Caco-2 (cell line): ENCODE measurements at regions of chr5 and their contacts with region 1.

Region 1: DNA sequence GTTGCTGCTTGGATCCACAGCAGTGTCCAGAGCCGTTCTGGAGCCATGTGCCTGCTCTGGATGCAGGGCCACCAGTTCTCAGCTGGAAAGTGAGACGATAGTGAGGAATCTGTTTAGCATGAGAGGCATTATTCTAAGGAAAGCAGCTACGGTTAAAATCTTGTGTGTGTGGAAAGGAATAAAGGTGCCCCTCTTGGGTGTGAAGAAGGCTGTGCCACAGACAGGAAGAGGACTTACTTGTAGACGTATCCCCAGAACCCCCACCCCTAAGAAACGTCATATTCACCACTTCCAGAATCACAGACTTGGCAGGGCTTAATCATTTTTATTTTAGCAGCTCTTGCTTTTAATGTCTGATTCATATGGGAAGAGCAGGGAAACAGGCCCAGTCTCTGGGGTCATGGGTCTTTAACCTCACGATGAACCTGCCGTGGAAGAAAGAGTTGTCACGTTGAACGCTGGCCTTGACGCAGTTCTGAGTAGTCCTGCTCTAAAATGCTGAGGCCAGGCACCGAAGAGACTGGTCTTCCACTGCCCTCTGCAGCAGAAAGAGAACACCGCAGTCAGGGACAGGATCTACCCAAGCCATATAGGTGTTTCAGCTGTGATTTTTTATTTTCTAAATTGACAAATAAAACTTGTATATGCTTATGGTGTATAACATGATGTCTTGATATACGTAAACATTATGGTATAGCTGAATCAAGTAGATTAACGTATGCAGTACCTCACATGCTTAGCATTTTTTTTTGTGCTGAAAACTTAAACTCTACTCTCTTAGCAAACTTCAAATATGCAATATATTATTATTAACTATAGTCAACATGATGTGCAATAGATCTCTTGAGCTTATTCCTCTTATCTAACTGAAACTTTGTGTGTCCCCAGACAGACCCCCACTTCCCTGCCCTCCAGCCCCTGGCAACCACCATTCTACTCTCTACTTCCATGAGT is 38.8 kb downstream of the CARTPT start:
- DNase-seq: peak; percentile 62 to 68
- H3K4me3 ChIP-seq: no peak overlapping the region
- H3K4me3 Mint-ChIP-seq: no peak overlapping the region
- H3K27ac Mint-ChIP-seq: no peak overlapping the region
- H3K4me1 ChIP-seq: no peaks in the 10 kb centered on the region
- H3K4me1 Mint-ChIP-seq: no peaks in the 10 kb centered on the region
- H3K27me3 ChIP-seq: peaks cover 1% of the 10 kb centered on the region; the same call in 1 of the 2 replicates
- H3K27me3 Mint-ChIP-seq: peaks cover 3% of the 10 kb centered on the region
- CTCF ChIP-seq: peak; percentile 76 to 90

Region 2: GRCh38 chr5:71475788-71476384 is 282.0 kb before region 1 on chr5:
- CTCF ChIA-PET with region 1: interaction called, 6 read pairs
- POLR2A ChIA-PET with region 1: no interaction called
- intact Hi-C with region 1: loop called (anchors 1 kb)
- DNase-seq: peak in 1 of 2 experiments; percentile 21
- H3K4me3 ChIP-seq: no peak overlapping the region
- H3K4me3 Mint-ChIP-seq: no peak overlapping the region
- H3K27ac Mint-ChIP-seq: no peak overlapping the region
- H3K4me1 ChIP-seq: no peaks in the 10 kb centered on the region
- H3K4me1 Mint-ChIP-seq: no peaks in the 10 kb centered on the region
- H3K27me3 ChIP-seq: no peaks in the 10 kb centered on the region
- H3K27me3 Mint-ChIP-seq: no peaks in the 10 kb centered on the region
- CTCF ChIP-seq: peak; percentile 59 to 67

Region 3: DNA sequence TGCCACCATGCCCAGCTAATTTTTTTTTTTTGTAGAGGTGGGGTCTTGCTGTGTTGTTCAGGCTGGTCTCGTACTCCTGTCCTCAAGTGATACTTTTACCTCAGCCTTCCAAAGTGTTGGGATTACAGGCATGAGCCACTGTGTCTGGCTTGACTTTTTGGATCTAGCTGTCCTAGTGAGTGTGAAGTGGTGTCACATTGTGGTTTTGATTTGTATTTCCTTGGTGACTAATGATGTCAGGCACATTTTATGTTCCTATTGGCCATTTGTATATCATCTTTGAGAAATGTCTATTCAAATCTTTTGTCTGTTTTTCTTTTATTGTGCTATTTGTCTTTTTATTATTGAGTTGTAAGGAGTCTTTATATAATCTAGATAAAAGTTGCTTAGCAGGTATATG is 224.3 kb before region 1 on chr5:
- CTCF ChIA-PET with region 1: no interaction called
- POLR2A ChIA-PET with region 1: no interaction called
- intact Hi-C with region 1: loop called (anchors 10 kb)
- DNase-seq: no peak
- H3K4me3 ChIP-seq: no peak overlapping the region
- H3K4me3 Mint-ChIP-seq: no peak overlapping the region
- H3K27ac Mint-ChIP-seq: peak overlapping the region; percentile 32
- H3K4me1 ChIP-seq: no peaks in the 10 kb centered on the region
- H3K4me1 Mint-ChIP-seq: no peaks in the 10 kb centered on the region
- H3K27me3 ChIP-seq: no peaks in the 10 kb centered on the region
- H3K27me3 Mint-ChIP-seq: no peaks in the 10 kb centered on the region
- CTCF ChIP-seq: no peak

Region 4: GRCh38 chr5:71573592-71573991 is 184.3 kb before region 1 on chr5:
- CTCF ChIA-PET with region 1: no interaction called
- POLR2A ChIA-PET with region 1: no interaction called
- intact Hi-C with region 1: loop called (anchors 1 kb)
- DNase-seq: peak; percentile 52
- H3K4me3 ChIP-seq: no peak overlapping the region
- H3K4me3 Mint-ChIP-seq: no peak overlapping the region
- H3K27ac Mint-ChIP-seq: peak overlapping the region; percentile 71
- H3K4me1 ChIP-seq: peaks cover 15% of the 10 kb centered on the region
- H3K4me1 Mint-ChIP-seq: peaks cover 20% of the 10 kb centered on the region
- H3K27me3 ChIP-seq: no peaks in the 10 kb centered on the region
- H3K27me3 Mint-ChIP-seq: no peaks in the 10 kb centered on the region
- CTCF ChIP-seq: peak in 1 of 2 experiments; percentile 34

Region 5: GRCh38 chr5:71586941-71587765 is 170.7 kb before region 1 on chr5 and contains the start of gene MCCC2:
- CTCF ChIA-PET with region 1: interaction called, 3 read pairs
- POLR2A ChIA-PET with region 1: no interaction called
- intact Hi-C with region 1: loop called (anchors 5 kb)
- DNase-seq: peak; percentile 99
- H3K4me3 ChIP-seq: peak within 1 kb of the TSS; percentile 87
- H3K4me3 Mint-ChIP-seq: peak within 1 kb of the TSS; percentile 97
- H3K27ac Mint-ChIP-seq: peak within 1 kb of the TSS; percentile 99
- H3K4me1 ChIP-seq: peaks cover 8% of the 10 kb centered on the region
- H3K4me1 Mint-ChIP-seq: peaks cover 21% of the 10 kb centered on the region
- H3K27me3 ChIP-seq: no peaks in the 10 kb centered on the region
- H3K27me3 Mint-ChIP-seq: no peaks in the 10 kb centered on the region
- CTCF ChIP-seq: no peak
- total RNA-seq, gene MCCC2: 113 and 124 TPM in 2 replicates

Region 6: DNA sequence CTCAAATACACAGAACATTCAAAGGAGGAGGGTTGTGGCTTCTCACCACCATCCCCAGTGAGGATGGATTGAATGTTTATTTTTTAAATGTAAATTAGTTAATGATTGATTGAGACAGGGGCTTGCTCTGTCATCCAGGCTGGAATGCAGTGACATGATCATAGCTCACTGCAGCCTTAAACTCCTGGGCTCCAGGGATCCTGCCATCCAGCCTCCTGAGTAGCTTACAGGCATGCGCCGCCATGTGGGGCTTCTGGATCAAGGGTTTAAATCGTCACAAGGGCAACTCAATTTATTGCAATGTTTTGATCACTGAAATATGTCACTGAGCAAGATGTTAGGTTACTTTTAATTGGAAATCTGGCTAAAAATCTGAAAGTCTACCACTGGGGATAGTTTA is 94.3 kb before region 1 on chr5:
- CTCF ChIA-PET with region 1: no interaction called
- POLR2A ChIA-PET with region 1: no interaction called
- intact Hi-C with region 1: loop called (anchors 5 kb)
- DNase-seq: peak; percentile 51 to 66
- H3K4me3 ChIP-seq: no peak overlapping the region
- H3K4me3 Mint-ChIP-seq: no peak overlapping the region
- H3K27ac Mint-ChIP-seq: no peak overlapping the region
- H3K4me1 ChIP-seq: no peaks in the 10 kb centered on the region
- H3K4me1 Mint-ChIP-seq: no peaks in the 10 kb centered on the region
- H3K27me3 ChIP-seq: no peaks in the 10 kb centered on the region
- H3K27me3 Mint-ChIP-seq: no peaks in the 10 kb centered on the region
- CTCF ChIP-seq: peak in 1 of 2 experiments; percentile 36

Region 7: DNA sequence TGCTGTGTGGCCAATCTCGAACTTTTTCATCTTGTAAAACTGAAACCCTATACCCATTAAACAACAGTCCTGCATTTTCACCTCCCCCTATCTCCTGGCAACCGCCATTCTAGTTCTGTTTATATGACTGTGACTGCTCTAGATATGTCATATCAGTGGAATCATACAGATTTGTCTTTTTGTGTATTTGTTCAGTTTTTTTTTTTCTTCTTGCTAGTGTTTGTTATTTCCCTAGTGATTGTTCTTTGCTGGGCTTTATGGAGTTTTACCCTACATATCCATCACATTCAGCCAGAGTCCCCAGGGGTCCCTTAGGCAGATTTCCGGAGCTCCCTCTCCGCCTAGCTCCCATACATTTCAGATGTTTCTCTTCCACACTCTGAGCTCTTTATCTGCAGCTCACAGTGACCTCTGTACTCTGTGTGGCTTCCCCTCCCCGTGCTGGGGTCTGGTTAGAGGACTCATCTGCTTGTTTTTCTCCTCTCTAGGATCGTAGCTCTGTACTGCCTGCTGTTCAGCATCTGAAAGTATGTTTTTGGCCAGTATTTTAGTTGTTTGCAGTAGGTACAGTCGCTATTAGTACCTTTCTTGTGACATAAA is 63.9 kb before region 1 on chr5:
- CTCF ChIA-PET with region 1: no interaction called
- POLR2A ChIA-PET with region 1: no interaction called
- intact Hi-C with region 1: loop called (anchors 5 kb)
- DNase-seq: peak; percentile 61 to 62
- H3K4me3 ChIP-seq: peak overlapping the region; percentile 15; the same call in 1 of the 2 replicates
- H3K4me3 Mint-ChIP-seq: peak overlapping the region; percentile 72
- H3K27ac Mint-ChIP-seq: peak overlapping the region; percentile 88
- H3K4me1 ChIP-seq: peaks cover 26% of the 10 kb centered on the region
- H3K4me1 Mint-ChIP-seq: peaks cover 19% of the 10 kb centered on the region
- H3K27me3 ChIP-seq: no peaks in the 10 kb centered on the region
- H3K27me3 Mint-ChIP-seq: no peaks in the 10 kb centered on the region
- CTCF ChIP-seq: no peak